ENCODE measurements at regions of chr14 and their contacts with region 1.

Region 1: DNA sequence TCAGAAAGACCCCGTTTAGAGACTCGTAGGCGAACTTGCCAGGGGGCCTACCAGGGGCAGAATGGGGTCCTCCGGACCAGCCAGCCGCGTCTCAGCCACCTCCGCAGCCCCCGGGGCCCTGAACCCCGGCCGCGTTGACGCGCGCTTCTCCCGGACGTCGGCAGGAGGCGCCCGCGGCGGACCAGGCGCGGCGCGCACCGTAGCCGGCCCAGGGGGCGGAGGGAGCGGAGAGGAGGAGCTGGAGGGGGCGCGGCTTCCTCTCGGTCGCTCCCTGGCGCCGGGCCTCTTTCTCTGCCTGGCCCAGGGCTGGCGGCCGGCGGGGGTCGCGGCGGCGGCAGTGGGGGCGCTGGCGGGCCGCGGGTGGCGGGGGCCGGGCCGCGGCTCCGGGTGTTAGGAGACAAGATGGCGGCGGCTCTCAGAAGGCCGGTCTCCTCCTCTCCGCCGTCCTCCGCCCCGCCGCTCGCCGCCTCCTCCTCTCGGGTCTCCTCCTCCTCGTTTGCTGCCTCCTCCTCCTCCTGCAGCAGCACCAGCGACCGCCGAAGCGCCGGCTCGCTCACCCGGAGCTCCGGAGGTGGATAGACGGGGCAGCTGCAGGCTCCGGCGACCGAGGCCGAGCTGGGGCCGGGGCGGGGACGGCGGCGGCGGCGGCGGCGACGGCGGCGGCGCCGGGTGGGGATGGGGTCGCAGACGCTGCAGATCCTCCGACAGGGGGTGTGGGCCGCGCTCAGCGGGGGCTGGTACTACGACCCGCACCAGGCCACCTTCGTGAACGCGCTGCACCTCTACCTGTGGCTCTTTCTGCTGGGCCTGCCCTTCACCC is at the start of gene PCNX1:
- DNase-seq: peak; percentile 95
- total RNA-seq, gene PCNX1: 46.2 TPM

Region 2: GRCh38 chr14:70816525-70816924 is 90.9 kb before region 1 on chr14:
- intact Hi-C with region 1: loop called (anchors 5 kb)
- DNase-seq: no peak

Region 3: GRCh38 chr14:70842851-70843462 is 64.4 kb before region 1 on chr14:
- intact Hi-C with region 1: loop called (anchors 5 kb)
- DNase-seq: no peak

Region 4: DNA sequence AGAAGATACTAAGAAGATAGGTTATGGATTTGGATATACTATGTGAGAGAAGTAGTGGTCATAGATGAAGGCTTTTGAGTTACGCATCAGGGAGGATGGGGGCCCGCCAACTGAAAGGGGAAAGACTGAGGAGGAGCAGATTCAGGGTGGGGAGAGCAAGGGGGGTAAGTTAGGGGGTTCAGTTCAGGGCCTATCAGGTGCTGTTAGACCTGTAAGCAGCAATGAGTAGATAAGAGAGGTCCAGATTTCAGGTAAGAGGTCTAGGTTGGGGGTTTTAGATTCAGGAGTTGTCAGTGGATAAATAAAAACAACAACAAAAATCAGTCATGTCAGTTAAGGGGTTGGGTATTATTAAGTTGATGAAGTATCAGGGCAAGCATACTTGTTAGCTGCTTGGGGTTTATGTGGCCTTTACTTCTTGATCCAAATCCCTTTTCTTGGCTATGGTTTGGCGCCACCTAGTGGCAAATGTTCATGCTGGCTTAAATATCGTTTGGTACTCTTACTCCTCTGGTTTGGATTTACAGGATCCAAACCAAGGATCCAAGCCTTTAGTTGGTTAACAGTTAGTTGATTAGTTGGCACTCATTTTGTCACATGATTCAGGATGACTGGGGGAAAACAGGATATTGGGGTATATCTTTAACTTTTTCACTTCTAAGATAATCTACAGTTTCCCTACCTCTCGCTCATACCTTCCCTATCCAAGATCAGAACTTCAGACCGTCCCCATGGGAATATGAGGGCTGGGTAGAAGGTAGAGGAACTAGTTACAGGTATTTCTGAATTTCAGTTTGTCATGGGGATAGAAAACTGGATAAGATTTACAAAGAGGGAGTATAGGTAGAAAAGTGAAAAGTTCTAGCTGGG is 65.0 kb after region 1 on chr14:
- intact Hi-C with region 1: loop called (anchors 5 kb)
- DNase-seq: peak; percentile 83

Region 5: GRCh38 chr14:70988452-70988851 is 81.1 kb after region 1 on chr14:
- intact Hi-C with region 1: no loop called
- DNase-seq: no peak

Measured in cardiac septum (tissue), 1 donor.